MCF 10A (cell line): ENCODE measurements at regions of chr6 and their contacts with region 1.

Region 1: GRCh38 chr6:75934643-75935472 is 137.6 kb downstream of the IMPG1 start:
- DNase-seq: peak; percentile 81
- H3K4me3 Mint-ChIP-seq: peak overlapping the region; percentile 61
- H3K27ac Mint-ChIP-seq: no peak overlapping the region
- H3K4me1 Mint-ChIP-seq: peaks cover 10% of the 10 kb centered on the region
- H3K27me3 Mint-ChIP-seq: no peaks in the 10 kb centered on the region
- CTCF ChIP-seq: peak; percentile 61

Region 2: GRCh38 chr6:75504465-75505228 is 430.2 kb before region 1 on chr6:
- CTCF ChIA-PET with region 1: no interaction called
- POLR2A ChIA-PET with region 1: no interaction called
- intact Hi-C with region 1: no loop called
- DNase-seq: peak; percentile 29
- H3K4me3 Mint-ChIP-seq: no peak overlapping the region
- H3K27ac Mint-ChIP-seq: no peak overlapping the region
- H3K4me1 Mint-ChIP-seq: no peaks in the 10 kb centered on the region
- H3K27me3 Mint-ChIP-seq: no peaks in the 10 kb centered on the region
- CTCF ChIP-seq: no peak

Region 3: GRCh38 chr6:75893058-75893775 is 41.6 kb before region 1 on chr6:
- CTCF ChIA-PET with region 1: interaction called, 23 read pairs
- POLR2A ChIA-PET with region 1: no interaction called
- intact Hi-C with region 1: no loop called
- DNase-seq: peak; percentile 72
- H3K4me3 Mint-ChIP-seq: no peak overlapping the region
- H3K27ac Mint-ChIP-seq: no peak overlapping the region
- H3K4me1 Mint-ChIP-seq: peaks cover 10% of the 10 kb centered on the region
- H3K27me3 Mint-ChIP-seq: no peaks in the 10 kb centered on the region
- CTCF ChIP-seq: peak; percentile 62

Region 4: GRCh38 chr6:76166874-76167273 is 232.0 kb after region 1 on chr6:
- CTCF ChIA-PET with region 1: interaction called, 6 read pairs
- POLR2A ChIA-PET with region 1: no interaction called
- intact Hi-C with region 1: loop called (anchors 2 kb)
- DNase-seq: no peak
- H3K4me3 Mint-ChIP-seq: no peak overlapping the region
- H3K27ac Mint-ChIP-seq: no peak overlapping the region
- H3K4me1 Mint-ChIP-seq: no peaks in the 10 kb centered on the region
- H3K27me3 Mint-ChIP-seq: no peaks in the 10 kb centered on the region
- CTCF ChIP-seq: no peak

Region 5: DNA sequence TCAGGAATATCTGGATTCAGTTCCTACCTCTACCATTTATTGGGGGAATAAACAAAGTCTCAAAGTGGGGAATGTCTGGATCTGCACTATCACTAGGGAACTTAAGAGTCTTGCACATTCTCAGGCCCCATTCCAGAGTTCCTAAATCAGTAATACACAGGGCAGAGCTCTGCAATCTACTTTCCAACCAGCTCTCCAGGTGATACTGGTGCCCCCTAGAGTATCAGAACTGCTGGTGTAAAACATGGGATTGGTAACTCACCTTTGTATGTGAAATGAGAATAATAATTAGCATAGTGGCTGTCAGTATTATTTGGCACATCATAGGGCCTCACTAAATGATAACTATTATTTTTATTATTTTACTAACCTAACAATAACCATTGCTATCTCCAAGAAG is 416.4 kb after region 1 on chr6:
- CTCF ChIA-PET with region 1: interaction called, 11 read pairs
- POLR2A ChIA-PET with region 1: no interaction called
- intact Hi-C with region 1: loop called (anchors 1 kb)
- DNase-seq: peak; percentile 53
- H3K4me3 Mint-ChIP-seq: no peak overlapping the region
- H3K27ac Mint-ChIP-seq: no peak overlapping the region
- H3K4me1 Mint-ChIP-seq: no peaks in the 10 kb centered on the region
- H3K27me3 Mint-ChIP-seq: no peaks in the 10 kb centered on the region
- CTCF ChIP-seq: peak; percentile 32

Region 6: DNA sequence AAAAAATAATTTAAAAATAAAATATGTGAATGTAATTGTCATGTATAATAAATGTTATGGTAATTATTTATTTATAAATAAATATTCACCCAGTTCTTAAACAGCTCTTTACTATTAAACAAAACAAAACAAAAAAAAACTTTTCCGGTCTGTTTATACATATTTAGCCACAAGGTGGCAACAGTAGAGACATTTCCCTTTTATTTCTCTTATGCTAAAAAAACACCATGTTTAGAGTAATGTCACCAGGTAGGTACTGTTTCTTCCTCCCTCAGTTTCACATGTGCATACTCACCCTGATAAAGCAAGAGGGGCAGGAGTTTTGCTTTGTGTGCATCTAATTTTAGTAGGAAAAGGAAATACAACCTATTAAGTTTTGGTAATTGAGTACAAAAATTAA is 748.0 kb after region 1 on chr6:
- CTCF ChIA-PET with region 1: interaction called, 24 read pairs
- POLR2A ChIA-PET with region 1: no interaction called
- intact Hi-C with region 1: loop called (anchors 2 kb)
- DNase-seq: peak; percentile 32
- H3K4me3 Mint-ChIP-seq: no peak overlapping the region
- H3K27ac Mint-ChIP-seq: no peak overlapping the region
- H3K4me1 Mint-ChIP-seq: no peaks in the 10 kb centered on the region
- H3K27me3 Mint-ChIP-seq: no peaks in the 10 kb centered on the region
- CTCF ChIP-seq: peak; percentile 36